K562 (cell line): ENCODE measurements at regions of chr4 and their contacts with region 1.

Region 1: GRCh38 chr4:1463088-1463926 is 57.1 kb upstream of the NKX1-1 start:
- DNase-seq: no peak
- ATAC-seq: no peak; the same call in 2 of the 3 replicates
- H3K4me3 ChIP-seq: no peak overlapping the region
- H3K27ac ChIP-seq: no peak overlapping the region
- H3K4me1 ChIP-seq: peaks cover 0 to 33% of the 10 kb centered on the region in 2 experiments; a peak in 1 of 5 replicates
- H3K27me3 ChIP-seq: peaks cover 47 to 73% of the 10 kb centered on the region in 2 experiments
- CTCF ChIP-seq: no peak
- EP300 ChIP-seq: no peak
- POLR2A ChIP-seq: no peak
- RAD21 ChIP-seq: no peak

Region 2: DNA sequence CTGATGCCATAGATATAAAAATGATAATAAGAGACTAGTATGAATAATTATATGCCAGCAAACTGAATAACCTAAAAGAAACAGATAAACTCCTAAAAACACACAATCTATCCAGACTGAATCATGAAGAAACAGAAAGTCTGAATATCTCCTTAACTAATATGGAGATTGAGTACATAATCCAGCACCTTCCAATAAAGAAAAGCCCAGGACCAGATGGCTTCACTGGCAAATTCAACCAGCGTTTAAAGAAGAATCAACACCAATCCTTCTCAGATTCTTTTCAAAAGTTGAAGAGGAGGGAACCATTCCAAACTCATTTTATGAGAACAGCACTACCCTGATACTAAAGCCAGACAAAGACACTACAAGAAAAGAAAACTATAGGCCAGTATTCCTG is 323.4 kb before region 1 on chr4:
- CTCF ChIA-PET with region 1: no interaction called
- POLR2A ChIA-PET with region 1: no interaction called
- in situ Hi-C with region 1: no loop called
- intact Hi-C with region 1: no loop called
- DNase-seq: no peak
- ATAC-seq: no peak
- H3K4me3 ChIP-seq: no peak overlapping the region
- H3K27ac ChIP-seq: no peak overlapping the region
- H3K4me1 ChIP-seq: no peaks in the 10 kb centered on the region
- H3K27me3 ChIP-seq: peaks cover 26 to 37% of the 10 kb centered on the region in 2 experiments; a peak in 3 of 5 replicates
- CTCF ChIP-seq: no peak
- EP300 ChIP-seq: no peak
- POLR2A ChIP-seq: no peak
- RAD21 ChIP-seq: no peak

Region 3: DNA sequence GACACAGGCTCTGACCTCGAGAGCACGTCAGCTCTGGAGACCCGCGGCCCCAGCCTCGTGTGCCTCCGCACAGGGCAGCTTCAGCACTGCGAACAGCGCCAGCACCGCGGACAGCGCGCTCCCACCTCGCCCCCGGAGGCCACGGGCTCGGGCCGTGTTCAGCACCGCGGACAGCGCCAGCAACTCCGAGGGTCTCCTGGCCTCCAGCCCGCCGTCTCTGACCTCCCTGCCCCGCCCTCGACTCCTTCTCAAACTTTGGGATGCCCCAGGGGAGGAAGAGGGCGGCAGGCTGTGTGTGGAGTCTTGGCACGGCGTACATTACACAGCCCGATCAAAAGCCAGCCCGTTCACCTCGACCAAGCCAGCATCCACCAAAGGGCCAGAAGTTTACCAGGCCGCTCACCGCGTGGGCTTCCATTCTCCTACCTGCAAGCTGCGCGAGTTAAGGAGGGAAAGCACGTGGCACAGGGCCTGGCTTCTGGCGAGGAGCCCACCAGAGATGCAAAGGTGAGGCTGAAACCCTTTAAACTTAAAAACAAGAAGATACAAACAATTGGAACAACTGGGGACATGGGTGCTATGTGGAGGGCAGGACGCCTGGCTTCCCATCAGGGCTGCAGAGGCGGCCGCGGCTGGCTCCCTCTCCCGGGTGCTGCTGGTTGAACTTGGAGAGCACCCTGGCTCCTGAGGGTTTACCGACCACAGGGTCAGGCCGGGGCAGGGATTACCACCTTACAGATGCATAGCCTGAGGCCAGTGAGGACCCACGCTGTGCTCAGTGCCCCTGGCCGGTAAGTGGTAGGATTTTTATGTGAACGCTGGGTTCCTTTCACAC is 52.6 kb before region 1 on chr4:
- CTCF ChIA-PET with region 1: no interaction called
- POLR2A ChIA-PET with region 1: no interaction called
- in situ Hi-C with region 1: loop called (anchors 5 kb)
- intact Hi-C with region 1: no loop called
- DNase-seq: peak; percentile 84 to 91 (median 88)
- ATAC-seq: peak; percentile 94
- H3K4me3 ChIP-seq: no peak overlapping the region
- H3K27ac ChIP-seq: no peak overlapping the region
- H3K4me1 ChIP-seq: peaks cover 6 to 35% of the 10 kb centered on the region in 2 experiments; a peak in 3 of 5 replicates
- H3K27me3 ChIP-seq: no peaks in the 10 kb centered on the region; a peak in 1 of 5 replicates
- CTCF ChIP-seq: no peak
- EP300 ChIP-seq: no peak
- POLR2A ChIP-seq: no peak
- RAD21 ChIP-seq: peak in 1 of 2 experiments; percentile 24; a peak in 1 of 4 replicates